Ovary (tissue), 10 donors: ENCODE measurements at regions of chr11 and their contacts with region 1.

Region 1: GRCh38 chr11:100980156-100980555 is 149.5 kb downstream of the PGR start:
- DNase-seq: no peak
- H3K4me3 ChIP-seq: no peak overlapping the region
- H3K27ac ChIP-seq: no peak overlapping the region
- H3K4me1 ChIP-seq: peaks cover 2% of the 10 kb centered on the region
- H3K27me3 ChIP-seq: no peaks in the 10 kb centered on the region
- CTCF ChIP-seq: peak in 2 of 3 donors; percentile 38 to 47
- EP300 ChIP-seq: no peak
- POLR2A ChIP-seq: no peak

Region 2: DNA sequence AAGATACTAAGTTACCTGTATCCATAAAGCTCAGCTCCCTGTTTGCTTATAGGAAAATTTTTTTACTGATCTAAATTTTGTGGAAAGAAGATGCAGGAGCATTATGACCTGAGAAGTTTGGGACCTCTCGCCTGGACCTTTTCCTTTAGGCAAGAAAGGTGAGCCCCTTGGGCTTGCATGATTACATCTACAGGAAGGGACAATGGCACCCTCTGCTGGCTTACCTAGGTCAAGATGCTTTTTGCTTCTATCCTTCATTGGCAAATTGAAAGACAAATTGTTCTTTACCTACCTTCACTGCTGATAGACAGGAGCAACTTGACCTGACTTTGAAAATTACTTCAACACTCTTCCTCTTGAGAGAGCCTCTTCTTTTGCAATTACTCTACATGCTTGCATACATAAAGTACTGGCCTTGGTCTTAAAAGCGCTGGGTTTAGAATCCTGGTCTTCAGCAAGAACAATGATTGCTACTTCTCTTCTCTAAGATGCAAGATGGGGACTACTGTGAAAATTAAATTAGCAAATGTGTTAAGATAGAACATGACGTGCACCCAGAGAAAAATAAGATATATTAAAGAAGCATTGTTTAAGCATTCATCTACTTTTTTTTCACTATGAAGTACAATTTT is 456.5 kb after region 1 on chr11:
- intact Hi-C with region 1: loop called in 3 of 4 experiments (anchors 5 to 10 kb)
- DNase-seq: peak; percentile 41 to 68 (median 56)
- H3K4me3 ChIP-seq: no peak overlapping the region
- H3K27ac ChIP-seq: no peak overlapping the region
- H3K4me1 ChIP-seq: peaks cover 14% of the 10 kb centered on the region
- H3K27me3 ChIP-seq: no peaks in the 10 kb centered on the region
- CTCF ChIP-seq: peak; percentile 41 to 57 (median 44)
- EP300 ChIP-seq: no peak
- POLR2A ChIP-seq: no peak